ENCODE measurements at regions of chr18 and their contacts with region 1.

Region 1: DNA sequence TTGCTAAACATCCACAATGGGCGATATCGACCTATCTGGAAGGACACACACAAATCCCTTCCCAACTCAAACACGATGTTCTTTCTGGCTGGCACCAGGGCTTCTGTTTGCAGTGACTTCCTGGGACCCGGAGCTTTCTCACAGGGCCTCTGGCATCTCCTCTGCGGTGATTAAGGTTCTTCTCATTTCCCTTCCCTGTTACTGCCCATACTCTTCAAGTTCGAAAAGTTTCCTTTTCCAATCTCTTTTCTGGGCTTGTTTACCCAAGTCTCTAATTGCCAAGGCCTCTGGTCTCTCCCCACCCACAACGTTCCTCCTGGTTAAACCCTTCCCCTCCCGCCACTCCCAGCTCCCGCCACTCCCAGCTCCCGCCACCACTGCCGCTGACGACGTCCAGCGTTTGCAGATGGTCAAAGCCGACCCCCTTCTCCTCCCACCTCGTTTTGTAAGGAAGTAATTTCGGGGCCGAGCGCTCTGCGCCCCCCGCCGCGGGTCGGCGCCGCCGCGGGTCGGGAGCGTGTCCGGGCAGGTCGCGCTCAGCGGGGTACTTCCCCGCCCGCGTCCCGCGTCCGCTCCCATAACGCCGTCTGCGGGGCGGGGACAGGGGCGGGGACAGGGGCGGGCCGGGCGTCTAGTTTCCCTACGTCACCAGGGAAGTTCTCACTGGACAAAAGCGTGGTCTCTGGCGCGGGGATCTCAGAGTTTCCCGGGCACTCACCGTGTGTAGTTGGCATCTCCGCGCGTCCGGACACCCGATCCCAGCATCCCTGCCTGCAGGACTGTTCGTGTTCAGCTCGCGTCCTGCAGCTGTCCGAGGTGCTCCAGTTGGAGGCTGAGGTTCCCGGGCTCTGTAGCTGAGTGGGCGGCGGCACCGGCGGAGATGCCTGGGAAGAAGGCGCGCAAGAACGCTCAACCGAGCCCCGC is at the start of gene PMAIP1:
- DNase-seq: peak; percentile 90
- ATAC-seq: peak; percentile 80
- H3K4me3 Mint-ChIP-seq: peak within 1 kb of the TSS; percentile 92
- H3K27ac Mint-ChIP-seq: peak within 1 kb of the TSS; percentile 97
- H3K4me1 Mint-ChIP-seq: peaks cover 30% of the 10 kb centered on the region
- H3K27me3 Mint-ChIP-seq: no peaks in the 10 kb centered on the region
- CTCF ChIP-seq: no peak
- total RNA-seq, gene PMAIP1: 92.8 to 98.9 TPM

Region 2: GRCh38 chr18:59837586-59837985 is 62.0 kb before region 1 on chr18:
- CTCF ChIA-PET with region 1: interaction called, 10 read pairs
- POLR2A ChIA-PET with region 1: interaction called, 11 read pairs
- intact Hi-C with region 1: loop called (anchors 5 kb)
- DNase-seq: peak; percentile 59
- ATAC-seq: peak; percentile 66
- H3K4me3 Mint-ChIP-seq: no peak overlapping the region
- H3K27ac Mint-ChIP-seq: no peak overlapping the region
- H3K4me1 Mint-ChIP-seq: peaks cover 7% of the 10 kb centered on the region
- H3K27me3 Mint-ChIP-seq: no peaks in the 10 kb centered on the region
- CTCF ChIP-seq: peak; percentile 81

Region 3: GRCh38 chr18:59885579-59886163 is 13.9 kb before region 1 on chr18:
- CTCF ChIA-PET with region 1: interaction called, 12 read pairs
- POLR2A ChIA-PET with region 1: interaction called, 136 read pairs
- intact Hi-C with region 1: no loop called
- DNase-seq: peak; percentile 60
- ATAC-seq: peak; percentile 79
- H3K4me3 Mint-ChIP-seq: peak overlapping the region; percentile 27
- H3K27ac Mint-ChIP-seq: peak overlapping the region; percentile 6
- H3K4me1 Mint-ChIP-seq: peaks cover 40% of the 10 kb centered on the region
- H3K27me3 Mint-ChIP-seq: no peaks in the 10 kb centered on the region
- CTCF ChIP-seq: no peak

Region 4: GRCh38 chr18:59927246-59927825 is 27.8 kb after region 1 on chr18:
- CTCF ChIA-PET with region 1: interaction called, 7 read pairs
- POLR2A ChIA-PET with region 1: interaction called, 36 read pairs
- intact Hi-C with region 1: no loop called
- DNase-seq: peak; percentile 60
- ATAC-seq: peak; percentile 86
- H3K4me3 Mint-ChIP-seq: no peak overlapping the region
- H3K27ac Mint-ChIP-seq: peak overlapping the region; percentile 63
- H3K4me1 Mint-ChIP-seq: peaks cover 24% of the 10 kb centered on the region
- H3K27me3 Mint-ChIP-seq: peaks cover 5% of the 10 kb centered on the region
- CTCF ChIP-seq: no peak